Esophagus muscularis mucosa (tissue), 4 donors: ENCODE measurements at regions of chr1 and their contacts with region 1.

Region 1: DNA sequence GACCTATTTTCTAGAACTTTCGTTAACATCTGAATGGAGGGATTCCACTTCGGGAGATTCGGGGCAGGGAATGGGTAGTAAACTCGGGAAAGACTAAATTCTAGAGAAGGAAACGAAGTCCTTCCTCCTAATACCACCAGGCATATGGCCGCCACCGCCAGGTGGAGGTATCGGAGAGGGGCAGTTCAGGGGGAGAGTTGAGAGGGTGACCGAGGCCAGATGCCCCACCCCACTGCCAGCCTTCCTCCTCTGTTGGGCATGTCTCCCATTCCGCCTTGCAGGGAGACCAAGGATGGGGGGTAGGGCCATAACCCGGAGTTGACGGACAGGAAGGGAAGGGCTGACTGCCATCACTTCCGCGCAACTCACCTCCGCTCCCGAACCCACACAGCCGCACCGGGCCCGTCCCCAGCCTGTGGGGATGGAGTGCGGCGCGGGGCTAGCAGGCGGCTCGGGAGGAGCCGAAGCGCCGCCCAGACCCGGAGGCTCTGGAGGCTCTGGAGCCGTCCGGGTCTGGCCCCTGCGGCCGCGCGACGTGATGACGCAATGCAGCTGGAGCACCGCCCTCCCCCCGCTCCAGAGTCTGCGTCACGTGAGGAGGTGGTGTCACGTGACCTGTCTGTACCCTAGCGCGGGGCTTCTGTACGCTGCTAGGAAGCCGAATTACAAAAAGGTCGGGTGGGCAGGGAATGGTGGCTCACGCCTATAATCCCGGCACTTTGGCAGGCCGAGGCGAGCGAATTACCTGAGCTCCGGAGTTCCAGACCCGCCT is at the start of gene KLHL12:
- DNase-seq: peak; percentile 99
- H3K4me3 ChIP-seq: peak within 1 kb of the TSS; percentile 75 to 98 (median 92)
- H3K27ac ChIP-seq: peak within 1 kb of the TSS; percentile 93 to 97 (median 96)
- H3K4me1 ChIP-seq: peaks cover 16 to 45% (median 29%) of the 10 kb centered on the region in 4 donors
- H3K27me3 ChIP-seq: peaks cover 0 to 4% (median 0%) of the 10 kb centered on the region in 4 donors
- CTCF ChIP-seq: peak; percentile 53 to 63 (median 62)
- EP300 ChIP-seq: no peak
- POLR2A ChIP-seq: peak; percentile 90
- total RNA-seq, gene KLHL12: 16.7 to 22.4 (median 19.3) TPM

Region 2: DNA sequence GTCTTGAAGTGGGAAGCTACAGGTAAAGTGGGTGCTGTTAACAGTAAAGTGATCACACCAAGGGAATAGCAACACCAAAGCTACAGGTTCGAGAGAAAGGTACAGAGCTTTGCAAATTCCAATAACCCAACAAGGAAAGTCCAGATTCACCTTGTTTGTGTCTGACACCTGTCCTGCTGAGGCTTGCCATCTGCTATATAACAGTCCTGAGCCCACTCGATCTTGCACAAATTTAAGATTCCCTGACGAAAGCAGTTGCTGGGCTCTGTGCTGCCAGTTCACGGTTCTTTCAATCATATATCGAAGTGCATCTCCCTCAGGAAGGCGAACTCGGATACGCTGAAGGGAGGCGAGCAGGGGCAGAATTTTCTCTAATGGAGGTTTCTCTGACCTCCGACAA is 193.7 kb before region 1 on chr1:
- intact Hi-C with region 1: no loop called
- DNase-seq: no peak
- H3K4me3 ChIP-seq: no peak overlapping the region
- H3K27ac ChIP-seq: no peak overlapping the region
- H3K4me1 ChIP-seq: peaks cover 0 to 8% (median 3%) of the 10 kb centered on the region in 4 donors
- H3K27me3 ChIP-seq: no peaks in the 10 kb centered on the region
- CTCF ChIP-seq: no peak
- EP300 ChIP-seq: no peak
- POLR2A ChIP-seq: no peak

Region 3: GRCh38 chr1:202957733-202958543 is 31.0 kb after region 1 on chr1 and contains the start of gene ADIPOR1:
- intact Hi-C with region 1: loop called (anchors 2 kb)
- DNase-seq: peak; percentile 96
- H3K4me3 ChIP-seq: peak within 1 kb of the TSS; percentile 87 to 100 (median 95)
- H3K27ac ChIP-seq: peak within 1 kb of the TSS; percentile 90 to 97 (median 95)
- H3K4me1 ChIP-seq: peaks cover 47 to 54% (median 50%) of the 10 kb centered on the region in 4 donors
- H3K27me3 ChIP-seq: peaks cover 0 to 4% (median 0%) of the 10 kb centered on the region in 4 donors
- CTCF ChIP-seq: peak in 1 of 3 experiments; percentile 18
- EP300 ChIP-seq: no peak
- POLR2A ChIP-seq: peak; percentile 94
- total RNA-seq, gene ADIPOR1: 53.6 to 93.4 (median 70.0) TPM

Region 4: GRCh38 chr1:202998836-202999750 is 72.2 kb after region 1 on chr1:
- intact Hi-C with region 1: loop called (anchors 2 kb)
- DNase-seq: no peak
- H3K4me3 ChIP-seq: no peak overlapping the region
- H3K27ac ChIP-seq: no peak overlapping the region
- H3K4me1 ChIP-seq: peaks cover 0 to 5% (median 2%) of the 10 kb centered on the region in 4 donors
- H3K27me3 ChIP-seq: peaks cover 0 to 12% (median 3%) of the 10 kb centered on the region in 4 donors
- CTCF ChIP-seq: peak; percentile 63 to 83 (median 70)
- EP300 ChIP-seq: no peak
- POLR2A ChIP-seq: no peak

Region 5: GRCh38 chr1:203031467-203031866 is 104.6 kb after region 1 on chr1:
- intact Hi-C with region 1: no loop called
- DNase-seq: no peak
- H3K4me3 ChIP-seq: no peak overlapping the region
- H3K27ac ChIP-seq: no peak overlapping the region
- H3K4me1 ChIP-seq: peaks cover 11 to 35% (median 17%) of the 10 kb centered on the region in 4 donors
- H3K27me3 ChIP-seq: peaks cover 0 to 8% (median 0%) of the 10 kb centered on the region in 4 donors
- CTCF ChIP-seq: peak in 1 of 3 experiments; percentile 26
- EP300 ChIP-seq: no peak
- POLR2A ChIP-seq: no peak

Region 6: DNA sequence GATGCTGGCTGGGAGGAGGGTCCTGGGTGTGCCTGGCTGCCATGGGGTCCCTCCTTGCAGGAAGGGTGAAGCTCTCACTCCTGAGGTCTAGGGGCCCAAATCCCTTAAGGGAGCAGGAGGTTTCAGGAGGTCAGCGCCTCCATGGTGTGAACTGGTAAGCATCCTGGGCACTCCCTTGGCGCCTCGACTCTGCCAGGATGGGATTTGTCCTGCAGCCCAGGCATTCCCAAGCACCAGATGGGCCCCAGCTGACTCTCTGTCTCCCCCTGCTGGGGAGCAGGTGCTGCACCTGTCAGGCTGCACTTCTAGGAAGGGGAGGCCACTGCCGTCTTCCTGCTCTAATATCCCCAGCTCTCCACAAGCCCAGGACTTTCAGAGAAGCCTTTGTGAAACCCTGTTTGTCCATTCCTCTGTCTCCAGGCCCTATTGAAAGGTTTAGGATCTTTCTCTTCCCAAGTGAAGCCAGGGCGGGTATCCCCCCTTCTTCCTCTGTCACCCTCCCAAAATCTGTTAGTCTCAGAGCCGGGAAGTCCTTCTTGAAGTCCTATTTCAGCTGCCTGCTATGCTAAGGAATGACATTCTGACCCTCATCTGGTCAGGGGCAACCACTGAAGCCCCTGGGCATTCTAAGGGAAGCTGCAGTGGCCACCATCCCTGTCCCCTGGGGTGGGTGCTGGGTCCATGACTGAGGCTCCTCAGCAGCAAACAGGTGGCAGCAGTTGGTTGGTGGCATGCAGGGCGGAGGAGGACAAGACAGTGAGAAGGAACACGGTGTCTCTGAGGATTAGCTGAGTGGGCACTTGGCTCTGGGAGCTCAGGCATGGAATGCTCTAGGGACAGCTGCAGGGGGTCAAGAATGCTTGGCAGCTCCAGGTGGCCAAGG is 245.5 kb after region 1 on chr1:
- intact Hi-C with region 1: no loop called
- DNase-seq: no peak
- H3K4me3 ChIP-seq: no peak overlapping the region
- H3K27ac ChIP-seq: no peak overlapping the region
- H3K4me1 ChIP-seq: peaks cover 0 to 7% (median 0%) of the 10 kb centered on the region in 4 donors
- H3K27me3 ChIP-seq: peaks cover 0 to 12% (median 0%) of the 10 kb centered on the region in 4 donors
- CTCF ChIP-seq: peak; percentile 77 to 84 (median 78)
- EP300 ChIP-seq: no peak
- POLR2A ChIP-seq: no peak

Region 7: DNA sequence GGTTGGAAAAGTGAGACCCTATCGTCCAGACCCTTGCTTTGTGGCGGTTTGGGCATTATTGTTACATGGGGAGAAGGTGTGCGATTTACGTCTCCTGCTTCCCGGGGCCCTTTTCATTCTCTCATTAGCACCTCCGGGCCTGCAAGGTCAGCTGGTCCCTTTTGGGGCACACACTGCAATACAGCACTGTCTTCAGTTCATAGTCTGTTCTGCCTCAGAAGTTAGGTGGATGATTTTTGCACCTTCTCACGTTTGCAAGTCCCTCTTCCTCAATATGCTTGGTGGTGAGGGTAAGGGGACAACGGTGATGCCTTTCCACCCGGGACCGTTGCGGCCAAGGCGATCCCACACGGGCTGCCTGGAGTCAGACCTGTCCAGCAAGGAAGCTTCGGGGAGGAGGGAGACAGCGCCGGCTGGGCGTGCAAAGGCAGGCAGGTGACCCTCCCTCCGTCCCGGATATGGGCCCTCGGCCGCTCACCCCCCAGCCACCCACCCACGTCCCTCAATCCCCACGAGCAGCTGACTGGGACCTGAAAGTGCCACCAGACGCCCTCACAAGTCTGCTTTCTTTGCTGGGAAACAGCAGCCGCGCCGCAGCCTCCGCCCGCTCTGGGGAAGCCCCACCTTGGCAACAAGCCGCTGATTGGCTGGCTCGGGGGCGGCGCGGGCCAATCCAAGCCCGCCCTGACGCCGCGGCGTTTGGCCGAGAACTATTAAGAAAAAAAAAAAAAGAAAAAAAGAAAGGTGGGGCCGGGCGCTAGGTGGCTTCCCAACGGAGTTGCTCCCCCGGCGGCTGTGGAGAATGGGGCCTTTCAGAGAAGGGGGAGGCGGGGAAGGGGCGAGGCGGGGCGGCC is 400.2 kb after region 1 on chr1:
- intact Hi-C with region 1: no loop called
- DNase-seq: peak; percentile 97
- H3K4me3 ChIP-seq: peak overlapping the region; percentile 59 to 66 (median 60)
- H3K27ac ChIP-seq: peak overlapping the region; percentile 92 to 95 (median 94)
- H3K4me1 ChIP-seq: peaks cover 53 to 69% (median 62%) of the 10 kb centered on the region in 4 donors
- H3K27me3 ChIP-seq: no peaks in the 10 kb centered on the region
- CTCF ChIP-seq: no peak
- EP300 ChIP-seq: no peak
- POLR2A ChIP-seq: no peak